ENCODE measurements at regions of chr13 and their contacts with region 1.

Region 1: DNA sequence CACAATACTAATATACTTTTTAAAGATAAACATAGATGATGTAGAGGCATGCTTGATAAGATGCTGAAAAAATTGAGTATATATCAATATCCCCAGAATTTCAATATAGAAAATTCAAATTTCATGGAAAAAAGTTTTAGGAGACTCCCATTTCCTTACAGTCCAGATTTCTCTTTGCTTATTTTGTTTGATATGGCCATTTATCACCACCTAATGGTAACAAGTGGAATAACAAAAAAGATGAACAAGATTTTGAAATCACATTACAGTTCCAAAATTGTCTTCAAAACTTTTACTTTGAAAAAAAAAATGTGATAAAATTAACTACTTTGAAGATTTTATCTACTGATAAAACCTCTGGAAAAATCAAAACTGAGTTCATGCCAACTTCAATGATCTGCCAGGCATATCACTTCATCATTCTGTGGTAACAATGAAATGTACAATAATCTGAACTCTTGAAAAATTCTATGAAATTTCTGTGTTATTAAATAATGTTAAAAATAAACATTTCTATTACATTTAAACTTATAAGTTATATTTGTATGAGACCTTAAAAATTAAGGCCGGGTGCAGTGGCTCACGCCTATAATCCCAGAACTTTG is 17.5 kb downstream of the MIPEP start:
- DNase-seq: peak; percentile 56
- H3K4me3 Mint-ChIP-seq: no peak overlapping the region
- H3K27ac Mint-ChIP-seq: no peak overlapping the region
- H3K4me1 Mint-ChIP-seq: no peaks in the 10 kb centered on the region
- H3K27me3 Mint-ChIP-seq: no peaks in the 10 kb centered on the region
- CTCF ChIP-seq: peak; percentile 43

Region 2: DNA sequence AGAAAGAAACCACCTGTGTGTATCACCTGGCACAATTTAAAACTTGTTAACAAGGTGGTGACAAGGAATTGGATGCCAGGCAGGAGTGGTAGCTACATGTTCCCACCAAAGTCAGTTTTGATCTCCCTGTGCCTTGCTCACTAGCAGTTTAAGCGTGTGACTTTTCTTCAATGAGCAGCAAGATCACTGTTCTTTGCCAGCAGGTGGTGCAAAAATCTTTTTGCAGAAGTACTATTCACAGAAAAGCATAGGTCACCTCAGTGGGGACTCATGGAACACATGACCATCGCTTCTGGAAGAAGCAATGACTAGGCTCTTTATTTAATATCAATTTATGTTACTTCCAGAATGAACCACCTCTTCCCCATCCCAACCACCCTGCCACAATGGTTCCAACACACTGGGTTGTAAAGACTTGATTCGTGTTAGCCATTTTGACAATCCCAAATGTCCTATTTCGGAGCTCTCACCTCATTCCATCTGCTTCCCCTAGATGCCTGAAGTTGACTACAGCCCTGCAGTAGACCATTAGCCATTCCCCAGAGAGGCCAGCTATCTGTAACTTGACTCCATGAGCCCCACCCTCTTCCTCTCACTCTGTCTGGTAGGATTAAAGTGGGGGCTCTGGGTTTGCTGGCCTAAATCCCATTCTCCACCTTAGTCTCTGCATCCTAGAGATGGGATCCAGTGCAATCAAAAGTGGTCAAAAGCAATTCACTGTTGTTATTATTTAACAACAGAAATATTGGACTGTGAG is 360.6 kb before region 1 on chr13:
- CTCF ChIA-PET with region 1: interaction called, 3 read pairs
- POLR2A ChIA-PET with region 1: no interaction called
- intact Hi-C with region 1: loop called (anchors 1 kb)
- DNase-seq: peak; percentile 28
- H3K4me3 Mint-ChIP-seq: no peak overlapping the region
- H3K27ac Mint-ChIP-seq: no peak overlapping the region
- H3K4me1 Mint-ChIP-seq: peaks cover 6% of the 10 kb centered on the region
- H3K27me3 Mint-ChIP-seq: peaks cover 25% of the 10 kb centered on the region
- CTCF ChIP-seq: peak; percentile 14

Region 3: GRCh38 chr13:23579072-23579895 is 292.4 kb before region 1 on chr13:
- CTCF ChIA-PET with region 1: interaction called, 4 read pairs
- POLR2A ChIA-PET with region 1: no interaction called
- intact Hi-C with region 1: loop called (anchors 1 kb)
- DNase-seq: peak; percentile 79
- H3K4me3 Mint-ChIP-seq: peak overlapping the region; percentile 69
- H3K27ac Mint-ChIP-seq: no peak overlapping the region
- H3K4me1 Mint-ChIP-seq: peaks cover 6% of the 10 kb centered on the region
- H3K27me3 Mint-ChIP-seq: peaks cover 47% of the 10 kb centered on the region
- CTCF ChIP-seq: no peak

Region 4: GRCh38 chr13:23715762-23716235 is 155.9 kb before region 1 on chr13:
- CTCF ChIA-PET with region 1: no interaction called
- POLR2A ChIA-PET with region 1: no interaction called
- intact Hi-C with region 1: loop called (anchors 5 kb)
- DNase-seq: peak; percentile 42
- H3K4me3 Mint-ChIP-seq: no peak overlapping the region
- H3K27ac Mint-ChIP-seq: no peak overlapping the region
- H3K4me1 Mint-ChIP-seq: no peaks in the 10 kb centered on the region
- H3K27me3 Mint-ChIP-seq: peaks cover 21% of the 10 kb centered on the region
- CTCF ChIP-seq: peak; percentile 21

Region 5: GRCh38 chr13:24038841-24039330 is 167.2 kb after region 1 on chr13:
- CTCF ChIA-PET with region 1: no interaction called
- POLR2A ChIA-PET with region 1: no interaction called
- intact Hi-C with region 1: no loop called
- DNase-seq: no peak
- H3K4me3 Mint-ChIP-seq: no peak overlapping the region
- H3K27ac Mint-ChIP-seq: no peak overlapping the region
- H3K4me1 Mint-ChIP-seq: no peaks in the 10 kb centered on the region
- H3K27me3 Mint-ChIP-seq: no peaks in the 10 kb centered on the region
- CTCF ChIP-seq: no peak